Adrenal gland (tissue), 19 donors: ENCODE measurements at regions of chr11 and their contacts with region 1.

Region 1: DNA sequence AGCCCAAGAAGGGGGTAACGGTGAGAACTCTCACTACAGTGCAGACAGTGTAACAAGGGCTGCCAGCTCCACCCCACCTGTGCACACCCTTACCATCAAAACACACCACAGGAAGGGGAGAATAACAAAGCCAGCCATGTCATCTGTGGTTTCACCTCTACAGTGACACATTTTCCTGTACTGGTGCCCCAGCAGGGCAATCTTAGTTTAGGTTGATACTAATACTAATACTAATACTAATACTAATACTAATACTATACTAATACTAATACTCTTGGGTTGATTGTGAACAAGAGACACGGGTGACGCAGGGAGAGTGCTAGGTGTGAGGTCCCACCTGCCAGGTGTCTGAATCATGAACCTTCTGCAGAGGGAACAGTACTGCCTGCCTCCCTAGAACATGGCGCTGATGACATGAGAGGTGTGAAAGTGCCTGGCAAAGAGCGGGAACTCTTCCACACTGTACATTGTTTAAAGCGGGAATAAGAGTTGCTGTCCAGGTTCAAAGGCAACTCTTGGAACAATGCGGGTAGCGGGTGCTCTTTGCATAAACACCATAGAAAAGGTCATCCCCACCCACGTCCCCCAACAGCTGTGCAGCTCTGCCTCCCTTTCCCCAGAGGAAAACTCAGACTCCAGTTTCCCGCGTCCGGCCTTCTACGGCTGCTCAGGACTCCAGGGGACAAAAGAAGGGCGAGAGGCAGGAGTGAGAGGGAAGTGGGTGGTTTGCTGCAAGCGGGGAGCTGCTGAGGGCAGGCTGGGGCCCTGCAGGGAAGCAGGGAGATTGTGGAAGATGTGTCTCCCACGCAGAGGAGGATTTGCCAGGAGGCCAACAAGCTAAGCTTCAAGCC is 25.0 kb upstream of the TMPRSS4 start:
- DNase-seq: peak in 2 of 7 donors; percentile 16 to 46
- H3K4me3 ChIP-seq: no peak overlapping the region
- H3K27ac ChIP-seq: no peak overlapping the region
- H3K4me1 ChIP-seq: no peaks in the 10 kb centered on the region
- H3K27me3 ChIP-seq: no peaks in the 10 kb centered on the region
- CTCF ChIP-seq: no peak
- POLR2A ChIP-seq: no peak

Region 2: DNA sequence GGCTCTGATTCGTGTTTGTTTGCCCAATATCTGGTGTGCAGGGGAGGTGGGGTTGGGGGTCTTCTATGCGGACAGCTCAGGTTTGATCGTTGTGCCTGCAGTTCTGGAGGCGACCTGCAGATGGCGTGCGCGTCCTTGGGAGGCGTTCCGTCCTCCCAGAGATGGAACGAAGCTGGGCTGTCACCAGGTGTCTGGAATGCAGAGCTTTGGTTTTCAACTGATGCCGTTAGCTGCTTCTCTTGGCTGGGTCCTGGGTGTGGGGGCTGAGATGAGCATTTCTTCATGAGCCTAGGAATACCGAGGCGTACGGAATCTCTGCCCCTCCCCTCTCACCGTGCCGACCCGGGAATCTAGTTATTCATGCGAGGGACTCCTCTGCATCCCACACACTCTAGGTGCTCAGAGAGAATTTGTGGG is 625.6 kb before region 1 on chr11:
- intact Hi-C with region 1: loop called in 1 of 2 experiments (anchors 10 kb)
- DNase-seq: peak; percentile 52 to 76 (median 64)
- H3K4me3 ChIP-seq: no peak overlapping the region
- H3K27ac ChIP-seq: no peak overlapping the region
- H3K4me1 ChIP-seq: no peaks in the 10 kb centered on the region
- H3K27me3 ChIP-seq: no peaks in the 10 kb centered on the region
- CTCF ChIP-seq: peak; percentile 80 to 93 (median 90)
- POLR2A ChIP-seq: no peak

Region 3: DNA sequence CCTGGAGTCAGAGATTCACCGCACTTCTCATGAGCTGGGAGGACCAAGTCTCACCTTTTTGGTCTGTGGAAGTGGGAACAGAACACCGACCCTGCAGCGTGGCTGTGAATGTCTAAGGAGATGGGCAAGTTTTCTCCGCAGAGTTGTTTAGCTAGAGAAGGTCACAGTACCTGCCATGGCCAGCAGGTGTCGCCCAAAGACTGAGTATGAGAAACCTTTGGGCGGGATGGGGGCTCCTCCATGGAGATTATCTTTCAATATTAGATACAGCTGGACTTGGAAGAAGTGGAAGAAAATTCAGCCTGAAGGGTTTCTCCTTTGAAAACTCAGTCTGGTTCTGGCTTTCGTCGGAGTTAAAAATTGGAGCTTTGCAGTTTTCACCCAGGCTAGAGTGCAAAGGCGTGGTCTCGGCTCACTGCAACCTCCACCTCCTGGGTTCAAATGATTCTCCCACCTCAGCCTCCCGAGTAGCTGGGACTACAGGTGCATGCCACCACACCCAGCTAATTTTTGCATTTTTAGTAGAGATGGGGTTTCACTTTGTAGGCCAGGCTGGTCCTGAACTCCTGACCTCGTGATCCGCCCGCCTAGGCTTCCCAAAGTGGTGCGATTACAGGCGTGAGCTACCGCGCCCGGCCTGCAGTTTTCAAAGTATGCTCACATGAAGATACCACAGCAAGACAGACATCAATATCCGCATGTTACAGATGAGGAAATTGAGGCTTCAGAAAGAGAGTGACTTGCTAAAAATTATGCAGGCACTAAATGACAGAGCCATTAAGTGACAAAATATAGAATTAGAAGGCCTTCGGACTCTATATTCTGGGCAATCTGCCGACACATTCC is 244.1 kb before region 1 on chr11:
- intact Hi-C with region 1: loop called in 1 of 2 experiments (anchors 5 kb)
- DNase-seq: peak; percentile 61 to 95 (median 86)
- H3K4me3 ChIP-seq: no peak overlapping the region
- H3K27ac ChIP-seq: no peak overlapping the region
- H3K4me1 ChIP-seq: peaks cover 0 to 3% of the 10 kb centered on the region in 2 donors
- H3K27me3 ChIP-seq: no peaks in the 10 kb centered on the region
- CTCF ChIP-seq: peak; percentile 92 to 97 (median 93)
- POLR2A ChIP-seq: no peak

Region 4: DNA sequence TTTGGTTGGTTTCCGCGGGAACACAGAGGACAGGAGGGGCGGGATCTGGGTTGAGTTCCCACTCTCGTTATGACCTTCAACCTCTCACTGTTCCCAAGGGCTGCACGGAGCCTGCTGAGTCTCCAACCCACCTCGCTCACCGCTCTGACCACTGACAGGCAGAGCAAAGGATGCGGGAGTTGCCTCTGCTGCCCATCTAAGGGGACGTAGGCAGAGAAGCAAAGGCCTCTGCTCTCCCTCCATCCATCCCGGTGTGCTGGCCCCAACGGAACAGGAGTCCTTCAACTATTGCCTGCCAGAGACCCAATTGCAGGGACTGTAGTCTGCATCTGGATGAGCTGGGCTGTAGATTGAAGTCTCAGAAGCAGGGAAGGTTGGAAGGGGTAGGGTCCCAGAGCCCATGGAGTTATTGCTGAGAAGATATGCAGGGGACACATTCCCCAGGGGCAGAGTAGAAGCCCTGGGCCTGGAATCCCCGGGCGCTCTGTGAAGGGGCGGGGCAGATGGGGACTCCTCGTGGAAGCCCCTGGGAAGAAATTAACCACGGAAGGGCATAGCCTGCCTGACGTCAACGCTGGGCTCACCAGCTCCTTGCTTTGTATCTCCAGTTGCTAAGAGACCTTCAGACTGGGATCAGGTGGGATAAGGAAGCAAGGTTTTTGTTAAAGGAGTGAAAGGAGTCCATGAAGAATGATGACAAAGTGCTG is 214.6 kb before region 1 on chr11:
- intact Hi-C with region 1: loop called in 1 of 2 experiments (anchors 5 kb)
- DNase-seq: peak in 3 of 7 donors; percentile 10 to 51 (median 19)
- H3K4me3 ChIP-seq: no peak overlapping the region
- H3K27ac ChIP-seq: no peak overlapping the region
- H3K4me1 ChIP-seq: peaks cover 0 to 9% of the 10 kb centered on the region in 2 donors
- H3K27me3 ChIP-seq: no peaks in the 10 kb centered on the region
- CTCF ChIP-seq: no peak
- POLR2A ChIP-seq: no peak

Region 5: GRCh38 chr11:118145285-118146227 is 93.7 kb after region 1 on chr11:
- intact Hi-C with region 1: no loop called
- DNase-seq: peak; percentile 68 to 91 (median 82)
- H3K4me3 ChIP-seq: peak overlapping the region in 3 of 4 donors; percentile 13 to 48 (median 35)
- H3K27ac ChIP-seq: no peak overlapping the region
- H3K4me1 ChIP-seq: no peaks in the 10 kb centered on the region
- H3K27me3 ChIP-seq: peaks cover 21% of the 10 kb centered on the region
- CTCF ChIP-seq: peak; percentile 87 to 95 (median 92)
- POLR2A ChIP-seq: no peak

Region 6: GRCh38 chr11:118227865-118228785 is 176.3 kb after region 1 on chr11:
- intact Hi-C with region 1: no loop called
- DNase-seq: no peak
- H3K4me3 ChIP-seq: no peak overlapping the region
- H3K27ac ChIP-seq: peak overlapping the region in 1 of 5 donors; percentile 61
- H3K4me1 ChIP-seq: peaks cover 4% of the 10 kb centered on the region in 2 donors
- H3K27me3 ChIP-seq: no peaks in the 10 kb centered on the region
- CTCF ChIP-seq: no peak
- POLR2A ChIP-seq: no peak